Caco-2 (cell line): ENCODE measurements at regions of chr6 and their contacts with region 1.

Region 1: DNA sequence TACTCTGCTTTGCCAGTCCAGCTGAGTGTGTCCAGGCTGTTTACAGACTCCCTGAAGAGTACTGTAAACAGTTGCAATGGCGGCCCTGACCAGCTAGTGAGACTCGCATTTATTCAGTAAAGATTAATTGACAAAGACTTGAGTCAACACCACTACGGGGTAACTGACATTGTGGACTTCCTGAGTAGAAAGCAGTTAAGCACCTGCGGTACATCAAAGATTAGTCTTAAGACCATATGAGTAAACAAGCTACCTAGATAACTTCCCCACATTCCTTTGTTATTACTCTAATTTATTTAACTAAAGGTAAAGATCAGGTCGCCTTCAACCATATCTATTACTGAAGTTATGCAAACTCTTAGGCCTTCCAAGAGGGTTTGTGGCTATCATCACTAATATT is 12.6 kb downstream of the VPS52 start:
- DNase-seq: peak in 1 of 2 experiments; percentile 40
- H3K4me3 ChIP-seq: no peak overlapping the region
- H3K4me3 Mint-ChIP-seq: no peak overlapping the region
- H3K27ac Mint-ChIP-seq: no peak overlapping the region
- H3K4me1 ChIP-seq: peaks cover 9% of the 10 kb centered on the region; the same call in 1 of the 2 replicates
- H3K4me1 Mint-ChIP-seq: no peaks in the 10 kb centered on the region
- H3K27me3 ChIP-seq: no peaks in the 10 kb centered on the region
- H3K27me3 Mint-ChIP-seq: no peaks in the 10 kb centered on the region
- CTCF ChIP-seq: no peak

Region 2: GRCh38 chr6:33271458-33272274 is 12.6 kb after region 1 on chr6 and contains the starts of genes RPS18 and VPS52:
- CTCF ChIA-PET with region 1: no interaction called
- POLR2A ChIA-PET with region 1: interaction called, 11 read pairs
- intact Hi-C with region 1: no loop called
- DNase-seq: peak; percentile 93 to 97
- H3K4me3 ChIP-seq: peak within 1 kb of the TSS; percentile 56
- H3K4me3 Mint-ChIP-seq: peak within 1 kb of the TSS; percentile 95
- H3K27ac Mint-ChIP-seq: peak within 1 kb of the TSS; percentile 100
- H3K4me1 ChIP-seq: peaks cover 18% of the 10 kb centered on the region
- H3K4me1 Mint-ChIP-seq: peaks cover 24% of the 10 kb centered on the region
- H3K27me3 ChIP-seq: no peaks in the 10 kb centered on the region
- H3K27me3 Mint-ChIP-seq: no peaks in the 10 kb centered on the region
- CTCF ChIP-seq: no peak
- total RNA-seq, gene RPS18: 2,340 and 2,366 TPM in 2 replicates
- total RNA-seq, gene VPS52: 55.1 and 55.6 TPM in 2 replicates